ENCODE measurements at regions of chr9 and their contacts with region 1.

Region 1: GRCh38 chr9:128552153-128552743 is at the start of gene SPTAN1:
- DNase-seq: peak; percentile 79
- H3K4me3 ChIP-seq: peak within 1 kb of the TSS; percentile 99
- H3K27ac ChIP-seq: peak within 1 kb of the TSS; percentile 95 to 97
- H3K4me1 ChIP-seq: peaks cover 4% of the 10 kb centered on the region
- H3K27me3 ChIP-seq: no peaks in the 10 kb centered on the region
- CTCF ChIP-seq: peak in 1 of 4 experiments; percentile 20
- POLR2A ChIP-seq: peak; percentile 85
- total RNA-seq, gene SPTAN1: 130 to 472 TPM

Region 2: GRCh38 chr9:128504485-128505413 is 47.5 kb before region 1 on chr9 and contains the start of gene GLE1:
- intact Hi-C with region 1: loop called (anchors 5 kb)
- DNase-seq: peak; percentile 93
- H3K4me3 ChIP-seq: peak within 1 kb of the TSS; percentile 69 to 84
- H3K27ac ChIP-seq: peak within 1 kb of the TSS; percentile 82 to 83
- H3K4me1 ChIP-seq: no peaks in the 10 kb centered on the region
- H3K27me3 ChIP-seq: no peaks in the 10 kb centered on the region
- CTCF ChIP-seq: peak in 1 of 4 experiments; percentile 19
- POLR2A ChIP-seq: peak; percentile 84
- total RNA-seq, gene GLE1: 31.5 to 34.2 TPM

Region 3: GRCh38 chr9:128607642-128608350 is 55.5 kb after region 1 on chr9:
- intact Hi-C with region 1: loop called (anchors 10 kb)
- DNase-seq: peak; percentile 95
- H3K4me3 ChIP-seq: no peak overlapping the region
- H3K27ac ChIP-seq: peak overlapping the region; percentile 74 to 78
- H3K4me1 ChIP-seq: peaks cover 12% of the 10 kb centered on the region
- H3K27me3 ChIP-seq: no peaks in the 10 kb centered on the region
- CTCF ChIP-seq: peak in 2 of 4 experiments; percentile 29 to 35
- POLR2A ChIP-seq: no peak

Region 4: DNA sequence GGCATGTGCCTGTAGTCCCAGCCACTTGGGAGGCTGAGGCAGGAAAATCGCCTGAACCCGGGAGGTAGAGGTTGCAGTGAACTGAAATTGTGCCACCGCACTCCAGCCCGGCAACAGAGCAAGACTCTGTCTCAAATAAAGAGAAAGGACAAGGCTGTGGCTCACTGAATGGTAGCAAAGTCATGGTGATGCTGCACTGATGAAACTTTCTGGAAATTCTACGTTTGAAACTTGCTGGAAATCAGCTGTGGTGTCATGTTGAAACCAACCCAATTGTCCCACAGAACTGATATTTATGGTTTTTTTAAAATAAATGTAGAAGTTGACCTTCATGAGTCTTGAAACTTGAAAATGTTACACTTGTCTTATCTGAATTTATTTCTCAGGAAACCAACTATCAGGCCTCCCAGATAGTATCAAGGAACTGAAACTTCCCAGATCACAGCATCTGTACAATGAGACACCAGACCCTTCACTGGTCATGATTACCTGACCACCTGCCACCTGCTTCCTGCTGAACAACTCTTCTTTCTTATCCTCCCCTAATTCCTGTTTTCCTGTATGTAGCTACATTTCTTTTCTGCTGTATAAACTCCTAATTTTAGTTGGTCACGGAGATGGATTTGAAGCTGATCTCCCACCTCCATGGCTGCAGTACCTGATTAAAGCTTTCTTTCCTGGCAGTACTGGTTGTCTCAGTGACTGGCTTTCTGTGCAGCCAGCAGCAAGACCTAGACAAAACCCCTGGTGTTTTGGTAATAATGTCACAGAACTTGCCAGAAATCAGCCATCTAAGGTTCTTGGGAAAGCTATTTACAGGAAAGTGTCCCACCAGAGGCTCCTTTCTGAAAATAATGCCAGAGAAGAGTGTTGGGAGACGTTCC is 229.2 kb after region 1 on chr9:
- intact Hi-C with region 1: no loop called
- DNase-seq: no peak
- H3K4me3 ChIP-seq: no peak overlapping the region
- H3K27ac ChIP-seq: no peak overlapping the region
- H3K4me1 ChIP-seq: no peaks in the 10 kb centered on the region
- H3K27me3 ChIP-seq: no peaks in the 10 kb centered on the region
- CTCF ChIP-seq: no peak
- POLR2A ChIP-seq: no peak

Measured in prostate gland (tissue), 2 donors.